ENCODE measurements at regions of chr9 and their contacts with region 1.

Region 1: GRCh38 chr9:125143375-125144090 is at the start of gene SCAI:
- DNase-seq: peak; percentile 98 to 99 (median 98)
- ATAC-seq: peak; percentile 100
- H3K4me3 ChIP-seq: peak within 1 kb of the TSS; percentile 56
- H3K27ac ChIP-seq: peak within 1 kb of the TSS; percentile 34; the same call in 1 of the 3 replicates
- H3K4me1 ChIP-seq: peaks cover 0 to 8% of the 10 kb centered on the region in 2 experiments; a peak in 3 of 5 replicates
- H3K27me3 ChIP-seq: no peaks in the 10 kb centered on the region
- CTCF ChIP-seq: peak; percentile 97 to 98 (median 97)
- EP300 ChIP-seq: no peak
- POLR2A ChIP-seq: no peak; the same call in 1 of the 2 replicates
- RAD21 ChIP-seq: peak; percentile 90 to 93
- polyA plus RNA-seq, gene SCAI: 0.70 to 0.84 TPM

Region 2: DNA sequence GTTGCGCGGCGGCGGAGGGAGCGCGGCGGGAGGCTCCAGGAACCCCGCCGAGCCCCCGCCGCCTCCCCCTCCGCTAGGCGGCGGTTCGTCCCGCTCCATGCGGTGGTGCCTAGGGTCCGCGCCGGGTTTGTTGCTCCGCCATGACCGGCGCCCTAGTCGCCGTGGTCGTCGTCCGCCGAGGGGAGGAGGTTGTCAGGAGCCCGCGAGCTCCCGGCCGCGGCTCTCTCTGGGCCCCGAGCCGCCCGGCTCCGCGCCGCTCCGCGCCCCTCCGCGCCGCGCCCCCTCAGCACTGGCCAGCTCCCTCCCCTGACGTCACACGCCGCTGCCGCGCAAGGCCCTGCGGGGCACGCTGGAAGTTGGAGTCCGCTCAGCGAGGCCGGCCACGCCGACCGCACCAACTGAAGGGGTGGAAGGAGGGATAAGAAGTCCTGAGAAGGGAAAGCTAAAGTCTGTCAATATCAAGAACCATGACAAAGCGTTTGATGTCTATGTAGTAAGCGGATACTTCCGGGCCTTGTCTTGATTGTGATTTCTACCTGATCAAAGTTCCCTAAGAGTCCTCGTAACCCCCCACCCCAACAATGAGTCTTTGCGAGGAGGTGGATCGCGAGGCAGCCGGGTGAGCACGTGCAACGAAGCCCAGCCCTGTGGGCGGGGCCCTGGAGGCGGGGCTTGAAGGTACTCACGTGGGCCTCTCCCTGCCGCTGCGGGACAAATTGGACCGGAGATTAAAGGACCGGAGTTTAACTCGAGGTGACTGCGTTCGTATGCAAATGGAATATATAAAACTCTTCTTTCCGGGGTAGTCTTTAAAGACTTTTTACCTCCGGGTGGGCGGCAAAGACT is 372.3 kb before region 1 on chr9 and contains the start of gene NR6A1:
- CTCF ChIA-PET with region 1: interaction called, 4 read pairs
- POLR2A ChIA-PET with region 1: interaction called, 3 read pairs
- in situ Hi-C with region 1: no loop called
- intact Hi-C with region 1: loop called (anchors 2 kb)
- DNase-seq: peak; percentile 95 to 98 (median 96)
- ATAC-seq: peak; percentile 86
- H3K4me3 ChIP-seq: peak within 1 kb of the TSS; percentile 48
- H3K27ac ChIP-seq: peak within 1 kb of the TSS; percentile 93
- H3K4me1 ChIP-seq: peaks cover 11 to 14% of the 10 kb centered on the region in 2 experiments
- H3K27me3 ChIP-seq: no peaks in the 10 kb centered on the region
- CTCF ChIP-seq: peak; percentile 16 to 33 (median 22); a peak in 3 of 6 replicates
- EP300 ChIP-seq: 0 out of 2 replicates have a peak, but pooled peaks have one; percentile 3
- POLR2A ChIP-seq: peak; percentile 60
- RAD21 ChIP-seq: no peak
- polyA plus RNA-seq, gene NR6A1: 9.7 to 17.7 TPM

Region 3: DNA sequence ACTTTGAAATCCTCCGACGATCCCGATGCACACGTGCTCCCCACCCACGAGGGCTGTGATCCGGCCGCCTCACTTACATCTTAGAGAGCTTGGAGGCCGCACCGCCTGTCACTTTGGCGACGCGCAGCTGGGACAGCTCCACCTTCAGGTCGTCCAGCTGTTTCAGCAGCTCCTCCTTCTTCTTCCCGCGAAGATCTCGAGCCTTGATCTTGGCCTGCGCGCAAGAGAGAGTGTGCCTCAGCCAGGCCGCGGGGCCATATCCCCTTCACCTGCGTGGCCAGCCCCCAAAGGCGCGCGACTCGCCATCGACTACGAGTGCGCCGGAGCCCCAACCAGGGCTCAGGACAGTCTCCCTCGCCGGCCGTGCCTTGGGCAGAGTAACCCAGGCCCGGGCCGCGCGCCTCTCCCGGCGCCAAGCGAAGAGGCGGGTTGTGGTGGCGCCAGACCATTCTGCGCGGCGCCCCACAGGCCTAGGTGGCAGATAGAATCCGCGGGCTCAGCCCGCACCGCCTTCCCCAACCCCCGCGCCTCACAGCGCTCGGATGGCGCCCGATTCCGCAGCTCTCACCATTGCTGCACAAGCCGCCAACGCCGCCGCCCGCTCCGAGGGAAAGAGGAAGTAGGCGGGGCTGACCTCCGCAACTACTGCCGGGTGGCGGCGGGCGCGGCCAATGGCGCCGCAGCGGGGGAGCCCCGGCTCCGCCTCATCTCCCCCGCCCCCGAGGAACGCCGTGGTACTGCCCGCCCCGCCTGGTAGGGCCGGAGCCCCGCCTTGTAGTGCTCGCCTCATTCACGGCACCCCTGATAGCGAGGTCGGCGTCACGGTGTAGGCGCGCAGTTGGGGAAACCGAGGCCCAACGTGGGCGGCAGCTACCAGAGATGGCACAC is 281.9 kb before region 1 on chr9 and contains the starts of genes ARPC5L and RPL35:
- CTCF ChIA-PET with region 1: no interaction called
- POLR2A ChIA-PET with region 1: interaction called, 8 read pairs
- in situ Hi-C with region 1: loop called (anchors 10 kb)
- intact Hi-C with region 1: loop called (anchors 2 kb)
- DNase-seq: peak; percentile 95 to 99 (median 96)
- ATAC-seq: peak; percentile 90
- H3K4me3 ChIP-seq: peak within 1 kb of the TSS; percentile 99
- H3K27ac ChIP-seq: peak within 1 kb of the TSS; percentile 94
- H3K4me1 ChIP-seq: peaks cover 23 to 42% of the 10 kb centered on the region in 2 experiments
- H3K27me3 ChIP-seq: no peaks in the 10 kb centered on the region
- CTCF ChIP-seq: peak; percentile 15 to 55 (median 33); a peak in 4 of 6 replicates
- EP300 ChIP-seq: no peak; the same call in 1 of the 2 replicates
- POLR2A ChIP-seq: peak; percentile 97
- RAD21 ChIP-seq: no peak
- polyA plus RNA-seq, gene ARPC5L: 25.4 to 26.3 TPM
- polyA plus RNA-seq, gene RPL35: 4,709 to 5,101 TPM

Region 4: DNA sequence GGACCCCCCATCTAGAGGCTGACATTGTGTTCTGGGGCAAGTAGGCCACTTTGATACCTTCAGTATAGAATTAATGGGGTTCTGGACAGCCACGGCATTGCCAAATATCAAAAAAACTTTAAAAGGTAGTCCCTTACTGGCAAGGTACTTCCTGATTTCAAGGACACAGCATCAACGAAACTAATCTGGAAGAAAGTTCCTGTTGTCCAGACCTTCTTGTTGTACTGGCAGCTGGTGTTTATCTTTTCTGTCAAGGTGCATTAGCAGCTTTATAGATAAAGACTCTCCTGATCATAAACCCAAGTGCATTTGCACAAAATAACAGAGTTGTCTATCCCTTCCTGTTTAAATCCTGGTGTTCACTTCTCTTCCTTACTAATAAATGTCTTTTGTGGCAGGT is 178.9 kb before region 1 on chr9:
- CTCF ChIA-PET with region 1: no interaction called
- POLR2A ChIA-PET with region 1: interaction called, 4 read pairs
- in situ Hi-C with region 1: no loop called
- intact Hi-C with region 1: loop called (anchors 2 kb)
- DNase-seq: peak in 2 of 4 experiments; percentile 64 to 80
- ATAC-seq: peak; percentile 74
- H3K4me3 ChIP-seq: no peak overlapping the region
- H3K27ac ChIP-seq: peak overlapping the region; percentile 55
- H3K4me1 ChIP-seq: peaks cover 10 to 31% of the 10 kb centered on the region in 2 experiments
- H3K27me3 ChIP-seq: no peaks in the 10 kb centered on the region
- CTCF ChIP-seq: no peak
- EP300 ChIP-seq: peak; percentile 94
- POLR2A ChIP-seq: no peak
- RAD21 ChIP-seq: peak in 1 of 2 experiments; percentile 16; a peak in 1 of 4 replicates

Region 5: DNA sequence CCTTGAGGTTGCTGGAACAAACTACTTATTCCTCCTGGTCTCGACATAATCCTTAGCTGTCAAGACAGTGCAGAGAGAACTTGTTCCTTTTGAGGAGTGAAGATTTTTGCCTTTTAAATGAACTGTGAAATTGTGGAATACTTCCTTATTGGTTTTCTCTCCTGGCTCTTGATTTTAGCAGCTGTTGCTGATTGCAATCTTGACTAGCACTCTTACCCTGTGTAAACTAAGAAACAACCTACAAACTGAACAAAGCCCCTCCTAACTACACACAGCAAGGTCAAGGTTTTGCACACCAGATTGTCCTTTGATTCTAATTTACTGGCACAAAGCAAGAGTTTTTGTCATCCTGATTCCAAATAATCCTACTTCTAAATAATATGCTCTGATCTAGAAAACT is 118.6 kb before region 1 on chr9:
- CTCF ChIA-PET with region 1: no interaction called
- POLR2A ChIA-PET with region 1: no interaction called
- in situ Hi-C with region 1: no loop called
- intact Hi-C with region 1: no loop called
- DNase-seq: no peak
- ATAC-seq: no peak
- H3K4me3 ChIP-seq: no peak overlapping the region
- H3K27ac ChIP-seq: no peak overlapping the region
- H3K4me1 ChIP-seq: no peaks in the 10 kb centered on the region
- H3K27me3 ChIP-seq: no peaks in the 10 kb centered on the region
- CTCF ChIP-seq: no peak
- EP300 ChIP-seq: no peak
- POLR2A ChIP-seq: no peak
- RAD21 ChIP-seq: no peak

Region 6: DNA sequence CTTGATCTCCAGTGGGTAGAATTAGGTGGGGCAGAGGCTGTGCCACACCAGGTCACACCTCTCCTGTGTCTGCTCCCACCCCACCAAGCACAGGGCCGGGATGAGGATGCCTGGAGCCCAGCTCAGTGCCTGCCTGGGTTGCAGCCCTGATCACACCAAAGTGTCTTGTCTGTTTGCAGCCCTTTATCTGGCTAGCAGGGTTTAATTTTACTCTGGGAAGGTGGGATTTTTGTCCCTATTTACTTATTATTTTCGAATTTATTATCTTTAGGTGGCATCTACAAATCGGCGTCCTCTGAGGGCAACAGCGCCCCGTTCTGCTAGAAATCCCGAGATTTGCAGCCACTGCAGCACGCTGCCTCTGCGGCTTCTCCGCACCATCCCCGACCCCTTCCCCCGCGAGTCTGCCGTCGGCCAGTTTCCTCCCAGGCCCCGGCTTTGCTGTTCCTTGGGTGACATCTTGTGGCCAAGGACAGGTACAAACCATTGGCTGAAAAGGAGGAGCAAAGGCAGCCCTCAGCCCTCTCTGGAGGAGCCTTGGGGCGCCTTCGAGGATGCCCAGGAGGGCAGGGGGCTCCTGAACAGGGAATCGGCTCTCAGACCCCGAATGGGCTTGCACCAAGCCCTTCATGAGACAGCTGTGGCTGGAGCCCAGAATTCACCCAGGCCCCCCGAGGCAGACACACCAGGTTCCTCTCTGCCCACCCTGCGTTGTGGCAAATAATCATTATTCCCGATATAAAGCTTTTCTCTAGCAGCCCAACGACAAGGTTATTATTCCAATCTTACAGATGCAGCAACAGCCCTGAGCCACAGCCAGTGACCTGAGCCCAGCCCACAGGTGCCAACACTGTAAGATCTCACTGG is 231.1 kb after region 1 on chr9:
- CTCF ChIA-PET with region 1: no interaction called
- POLR2A ChIA-PET with region 1: no interaction called
- in situ Hi-C with region 1: no loop called
- intact Hi-C with region 1: loop called (anchors 5 kb)
- DNase-seq: peak; percentile 79 to 82 (median 81)
- ATAC-seq: peak; percentile 95
- H3K4me3 ChIP-seq: peak overlapping the region; percentile 12; the same call in 1 of the 2 replicates
- H3K27ac ChIP-seq: no peak overlapping the region
- H3K4me1 ChIP-seq: peaks cover 8 to 19% of the 10 kb centered on the region in 2 experiments; a peak in 4 of 5 replicates
- H3K27me3 ChIP-seq: no peaks in the 10 kb centered on the region
- CTCF ChIP-seq: peak; percentile 81 to 89 (median 88)
- EP300 ChIP-seq: no peak
- POLR2A ChIP-seq: no peak
- RAD21 ChIP-seq: peak; percentile 91 to 93